CD4-positive, alpha-beta T cell (primary cell): ENCODE measurements at regions of chr1 and their contacts with region 1.

Region 1: DNA sequence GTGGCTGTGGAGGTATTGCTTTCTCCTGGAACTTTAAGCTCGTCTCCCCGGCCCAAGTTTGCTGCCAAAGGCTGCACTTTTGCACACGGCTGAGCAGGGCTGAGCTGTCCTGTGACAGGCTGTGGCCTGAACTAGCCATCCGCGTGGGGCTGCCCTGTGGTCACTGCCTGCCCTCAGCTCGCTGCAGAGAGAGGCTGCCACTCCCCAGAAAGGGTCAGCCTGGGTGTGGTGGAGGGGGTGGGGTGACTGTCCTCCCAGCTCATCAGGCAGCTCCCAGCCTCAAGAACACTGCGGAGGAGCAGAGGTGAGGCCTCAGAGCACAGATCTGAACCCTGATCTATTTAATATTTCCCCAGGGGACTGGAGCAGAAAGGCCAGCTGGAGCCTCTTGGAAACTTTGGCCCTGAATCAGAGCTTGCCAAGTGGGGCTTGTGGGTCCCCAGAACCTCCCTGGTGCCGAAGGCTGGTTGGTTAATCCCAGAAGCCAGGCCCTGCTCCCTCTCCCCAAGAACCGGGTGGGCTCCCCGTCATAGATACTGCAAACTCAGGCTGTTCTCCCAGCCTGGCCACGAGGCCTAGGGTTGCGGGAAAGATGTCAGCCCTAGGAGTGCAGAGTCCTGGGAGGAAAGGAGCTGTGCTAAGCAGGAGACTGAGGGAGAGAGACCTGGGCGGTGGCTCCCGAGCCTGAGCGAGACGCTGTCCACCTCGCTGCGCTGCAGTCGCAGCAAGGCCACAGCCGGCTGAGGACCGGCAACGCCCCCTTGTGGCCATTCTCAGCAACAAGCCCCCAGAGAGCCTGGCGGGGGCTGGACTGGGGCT is 125.1 kb upstream of the IPO9 start:
- DNase-seq: peak; percentile 33 to 74 (median 46)
- ATAC-seq: peak; percentile 67
- H3K4me3 ChIP-seq: no peak overlapping the region
- H3K4me3 Mint-ChIP-seq: no peak overlapping the region
- H3K27ac ChIP-seq: no peak overlapping the region
- H3K27ac Mint-ChIP-seq: no peak overlapping the region
- H3K4me1 ChIP-seq: no peaks in the 10 kb centered on the region
- H3K4me1 Mint-ChIP-seq: no peaks in the 10 kb centered on the region
- H3K27me3 ChIP-seq: peaks cover 0 to 3% of the 10 kb centered on the region in 2 experiments
- H3K27me3 Mint-ChIP-seq: peaks cover 4% of the 10 kb centered on the region
- CTCF ChIP-seq: peak; percentile 75

Region 2: DNA sequence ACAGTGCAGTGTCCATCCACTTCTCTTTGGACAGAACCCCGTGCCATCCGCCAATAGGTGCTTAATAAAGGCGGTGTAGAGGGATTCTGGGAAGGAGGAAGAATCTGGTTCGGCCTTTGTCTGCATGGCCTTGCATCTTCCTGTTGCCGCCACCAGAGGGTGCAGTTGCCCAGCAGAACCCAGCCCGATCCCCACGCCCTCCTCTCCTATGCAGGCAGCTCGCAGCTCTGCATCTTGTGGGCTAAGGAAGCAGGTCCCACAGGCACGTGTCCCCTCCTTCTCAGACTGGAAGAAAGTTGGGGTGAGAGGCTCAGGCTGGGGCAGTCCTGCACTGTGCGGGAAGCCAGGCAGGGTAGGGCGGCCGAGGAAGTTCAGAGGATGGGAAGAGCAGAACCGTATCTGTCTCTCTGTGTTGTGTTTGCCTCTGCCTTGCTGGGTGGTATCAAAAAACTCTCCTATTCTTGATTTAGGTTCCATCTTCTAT is 144.1 kb before region 1 on chr1:
- CTCF ChIA-PET with region 1: no interaction called
- POLR2A ChIA-PET with region 1: no interaction called
- intact Hi-C with region 1: loop called (anchors 1 to 2 kb)
- DNase-seq: peak; percentile 47 to 82 (median 60)
- ATAC-seq: peak; percentile 98
- H3K4me3 ChIP-seq: no peak overlapping the region
- H3K4me3 Mint-ChIP-seq: no peak overlapping the region
- H3K27ac ChIP-seq: no peak overlapping the region
- H3K27ac Mint-ChIP-seq: no peak overlapping the region
- H3K4me1 ChIP-seq: peaks cover 4% of the 10 kb centered on the region
- H3K4me1 Mint-ChIP-seq: peaks cover 6% of the 10 kb centered on the region
- H3K27me3 ChIP-seq: no peaks in the 10 kb centered on the region
- H3K27me3 Mint-ChIP-seq: no peaks in the 10 kb centered on the region
- CTCF ChIP-seq: peak; percentile 94

Region 3: DNA sequence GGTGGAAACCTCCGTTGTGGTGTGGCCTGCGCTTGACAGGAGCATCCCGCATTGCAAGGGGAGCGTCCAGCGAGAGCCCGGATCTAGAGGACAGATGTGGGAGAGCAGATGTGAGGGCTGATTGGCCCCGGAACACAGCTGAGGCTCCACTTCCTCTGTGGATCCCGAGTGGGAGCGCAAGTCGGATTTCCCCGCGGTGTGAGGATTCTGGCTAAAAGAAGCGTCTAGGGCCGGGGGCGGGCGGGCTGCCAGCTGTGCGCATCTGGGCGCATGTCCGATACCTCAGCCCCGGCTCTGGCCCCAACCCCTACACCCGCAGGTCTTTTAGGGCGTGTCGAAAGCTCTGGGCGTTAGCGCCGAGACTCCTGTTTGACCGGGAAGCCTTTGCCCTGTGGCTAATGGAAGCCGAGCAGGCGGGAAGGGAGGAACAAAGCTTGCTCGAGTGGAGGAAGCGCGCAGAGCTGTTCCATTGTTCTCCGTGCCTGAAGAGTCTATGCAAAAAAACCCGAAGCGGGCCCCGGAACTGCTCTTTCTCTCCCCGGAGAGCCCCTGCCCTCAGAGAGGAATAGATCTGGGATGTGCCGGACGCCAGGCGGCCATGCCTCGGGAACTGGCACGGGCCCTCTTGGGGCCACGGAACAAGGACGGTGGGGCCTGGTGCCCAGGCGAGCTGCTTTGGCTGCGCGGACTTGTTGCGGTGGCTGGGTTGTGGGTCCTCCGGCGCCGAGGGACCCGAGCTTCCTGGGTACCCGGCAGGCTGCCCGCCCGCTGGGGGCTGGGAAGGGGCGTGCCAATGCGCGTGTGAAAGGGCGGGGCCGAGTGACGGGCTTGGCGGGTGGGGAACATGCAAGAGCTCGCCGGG is 53.8 kb before region 1 on chr1:
- CTCF ChIA-PET with region 1: no interaction called
- POLR2A ChIA-PET with region 1: no interaction called
- intact Hi-C with region 1: no loop called
- DNase-seq: no peak
- ATAC-seq: no peak
- H3K4me3 ChIP-seq: no peak overlapping the region
- H3K4me3 Mint-ChIP-seq: no peak overlapping the region
- H3K27ac ChIP-seq: no peak overlapping the region
- H3K27ac Mint-ChIP-seq: no peak overlapping the region
- H3K4me1 ChIP-seq: peaks cover 7% of the 10 kb centered on the region
- H3K4me1 Mint-ChIP-seq: no peaks in the 10 kb centered on the region
- H3K27me3 ChIP-seq: peaks cover 22 to 39% of the 10 kb centered on the region in 2 experiments
- H3K27me3 Mint-ChIP-seq: peaks cover 37% of the 10 kb centered on the region
- CTCF ChIP-seq: no peak

Region 4: DNA sequence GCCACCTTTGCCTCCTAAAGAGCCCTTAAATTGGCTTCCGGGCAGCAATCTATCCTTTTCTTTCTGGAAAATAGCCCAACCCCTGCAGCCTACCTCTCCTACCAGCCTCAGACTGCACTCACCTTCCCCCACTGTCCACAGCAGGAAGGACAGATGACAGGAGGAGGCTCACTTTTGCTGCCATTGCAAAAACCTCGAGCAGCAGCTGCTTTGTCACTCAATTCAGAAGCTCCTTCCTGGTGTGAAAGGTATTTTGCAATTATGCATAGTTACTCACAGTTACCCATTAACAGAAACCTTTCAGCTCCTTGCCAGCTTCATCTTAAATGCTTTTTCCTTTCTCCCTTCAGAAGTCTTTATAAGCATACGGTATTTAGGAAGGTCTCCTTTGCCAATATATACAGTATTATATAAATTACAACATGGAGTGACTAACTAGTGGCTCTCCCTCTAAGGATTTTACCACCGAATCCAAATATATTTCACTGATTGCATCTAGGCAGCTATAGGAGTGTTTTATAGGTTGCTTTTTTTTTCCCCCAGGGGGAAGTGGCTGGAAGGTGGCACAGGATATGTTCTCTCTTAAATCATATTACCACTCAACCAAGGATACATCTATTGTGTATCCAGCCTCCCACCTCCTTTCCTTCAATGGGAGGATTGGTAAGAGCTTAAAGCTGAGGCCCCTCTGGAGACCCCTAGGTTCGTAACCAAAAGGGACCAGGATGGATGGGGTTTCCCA is 16.9 kb before region 1 on chr1:
- CTCF ChIA-PET with region 1: no interaction called
- POLR2A ChIA-PET with region 1: no interaction called
- intact Hi-C with region 1: no loop called
- DNase-seq: no peak
- ATAC-seq: no peak
- H3K4me3 ChIP-seq: no peak overlapping the region
- H3K4me3 Mint-ChIP-seq: no peak overlapping the region
- H3K27ac ChIP-seq: no peak overlapping the region
- H3K27ac Mint-ChIP-seq: no peak overlapping the region
- H3K4me1 ChIP-seq: no peaks in the 10 kb centered on the region
- H3K4me1 Mint-ChIP-seq: no peaks in the 10 kb centered on the region
- H3K27me3 ChIP-seq: no peaks in the 10 kb centered on the region
- H3K27me3 Mint-ChIP-seq: peaks cover 4% of the 10 kb centered on the region
- CTCF ChIP-seq: no peak

Region 5: GRCh38 chr1:201783572-201783971 is 79.7 kb after region 1 on chr1:
- CTCF ChIA-PET with region 1: no interaction called
- POLR2A ChIA-PET with region 1: no interaction called
- intact Hi-C with region 1: no loop called
- DNase-seq: no peak
- ATAC-seq: no peak
- H3K4me3 ChIP-seq: no peak overlapping the region
- H3K4me3 Mint-ChIP-seq: no peak overlapping the region
- H3K27ac ChIP-seq: no peak overlapping the region
- H3K27ac Mint-ChIP-seq: no peak overlapping the region
- H3K4me1 ChIP-seq: no peaks in the 10 kb centered on the region
- H3K4me1 Mint-ChIP-seq: no peaks in the 10 kb centered on the region
- H3K27me3 ChIP-seq: no peaks in the 10 kb centered on the region
- H3K27me3 Mint-ChIP-seq: no peaks in the 10 kb centered on the region
- CTCF ChIP-seq: no peak